ENCODE measurements at regions of chr9 and their contacts with region 1.

Region 1: DNA sequence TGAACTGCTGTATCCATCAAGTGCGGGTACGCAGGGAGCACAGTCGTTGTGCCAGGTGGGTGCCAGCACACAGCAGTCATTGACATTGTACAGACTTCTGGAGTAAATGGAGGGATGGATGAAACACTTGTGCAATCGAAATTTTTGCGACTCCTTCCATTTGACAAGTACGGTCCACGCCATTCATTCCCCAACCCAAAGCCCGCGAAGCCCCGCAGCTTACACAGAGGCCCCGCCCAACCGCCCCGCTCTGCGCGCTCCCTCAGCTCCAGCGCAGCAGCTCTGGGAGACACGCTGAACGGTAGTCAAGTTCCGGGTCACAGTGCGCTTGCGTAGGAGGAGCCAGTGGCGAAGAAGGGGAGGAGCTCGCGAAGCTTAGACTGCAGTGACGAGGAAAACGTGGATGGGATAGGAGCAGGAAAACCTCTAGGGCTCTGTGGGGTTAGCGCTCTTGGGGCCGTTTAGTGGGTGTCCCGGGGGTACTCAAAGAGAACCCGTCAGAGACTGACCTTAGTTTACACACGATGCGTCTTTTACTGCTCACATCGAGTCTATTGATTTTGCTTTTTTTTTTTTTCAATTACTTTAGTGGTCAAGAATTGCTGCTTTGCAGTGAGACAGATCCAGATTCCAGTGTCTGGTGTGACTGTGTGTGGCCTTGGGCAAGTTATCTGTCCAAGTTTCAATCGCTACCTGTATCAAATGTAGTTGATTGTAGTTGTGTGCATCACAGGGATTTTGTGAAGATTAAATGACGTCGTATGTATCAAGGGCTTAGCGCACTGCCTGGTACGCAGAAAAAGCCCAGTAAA is 15.3 kb upstream of the MSANTD3 start:
- DNase-seq: peak; percentile 83
- ATAC-seq: peak; percentile 100
- H3K4me3 Mint-ChIP-seq: peak overlapping the region; percentile 82
- H3K27ac Mint-ChIP-seq: peak overlapping the region; percentile 66
- H3K4me1 Mint-ChIP-seq: peaks cover 14% of the 10 kb centered on the region
- H3K27me3 Mint-ChIP-seq: peaks cover 34% of the 10 kb centered on the region

Region 2: DNA sequence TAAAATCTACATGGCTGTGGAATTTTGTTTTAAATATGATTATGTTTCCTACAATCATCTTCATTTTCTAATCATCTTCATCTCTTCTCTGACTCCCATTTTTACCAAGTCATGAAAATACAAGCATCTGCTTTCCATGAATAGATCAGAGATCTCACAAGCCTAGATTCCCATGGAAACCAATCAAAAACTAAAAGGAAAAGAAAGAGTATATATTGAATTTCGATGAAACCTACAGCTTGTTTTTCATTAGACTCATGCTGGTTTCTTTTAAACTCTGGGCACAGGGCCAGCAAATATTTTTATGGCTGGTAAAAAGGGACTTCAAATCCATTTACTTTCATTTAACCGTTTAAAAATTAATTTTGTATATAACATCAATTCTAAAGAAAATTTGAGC is 261.5 kb before region 1 on chr9:
- POLR2A ChIA-PET with region 1: no interaction called
- DNase-seq: no peak
- ATAC-seq: no peak
- H3K4me3 Mint-ChIP-seq: no peak overlapping the region
- H3K27ac Mint-ChIP-seq: no peak overlapping the region
- H3K4me1 Mint-ChIP-seq: no peaks in the 10 kb centered on the region
- H3K27me3 Mint-ChIP-seq: no peaks in the 10 kb centered on the region

Region 3: DNA sequence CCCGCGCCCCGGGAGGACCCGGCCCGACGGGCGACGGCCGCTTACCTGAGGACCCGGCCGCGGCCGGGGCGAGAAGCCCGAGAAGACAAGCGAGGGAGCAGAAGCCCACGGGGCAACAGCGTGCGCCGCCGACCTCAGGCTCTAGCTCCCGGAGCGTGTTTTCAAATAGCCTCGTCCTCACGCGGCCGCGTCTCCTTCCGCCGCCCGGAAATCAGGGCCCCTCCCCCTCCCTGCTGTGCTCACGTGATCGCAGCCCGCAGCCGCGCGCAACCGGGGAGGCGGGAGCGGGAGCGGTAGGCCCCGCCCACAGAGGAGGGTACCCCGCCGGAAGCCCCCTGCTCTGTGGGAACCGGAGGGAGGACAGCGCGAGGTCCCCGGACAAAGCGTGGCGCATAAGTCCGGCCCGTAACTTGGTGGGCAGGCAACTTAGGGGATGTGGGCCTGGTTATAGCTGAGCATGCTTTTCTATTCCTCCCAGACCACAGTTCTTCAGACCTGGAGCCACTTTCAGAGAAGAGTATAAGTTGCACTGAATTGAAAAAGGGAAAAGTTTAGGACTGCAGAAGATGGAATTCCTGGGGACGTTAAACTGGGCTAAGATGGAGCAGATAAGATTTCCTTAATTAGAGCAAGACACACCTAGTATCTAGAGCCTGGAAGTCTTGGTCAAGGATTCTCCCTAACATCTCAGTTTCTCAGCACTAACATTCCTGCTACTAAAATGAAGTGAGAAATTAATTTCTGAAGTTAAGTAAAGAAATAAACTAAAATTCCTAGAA is 58.8 kb before region 1 on chr9 and contains the start of gene TEX10:
- POLR2A ChIA-PET with region 1: interaction called, 10 read pairs
- DNase-seq: peak; percentile 91
- ATAC-seq: peak; percentile 87
- H3K4me3 Mint-ChIP-seq: peak within 1 kb of the TSS; percentile 97
- H3K27ac Mint-ChIP-seq: peak within 1 kb of the TSS; percentile 86
- H3K4me1 Mint-ChIP-seq: peaks cover 41% of the 10 kb centered on the region
- H3K27me3 Mint-ChIP-seq: no peaks in the 10 kb centered on the region
- total RNA-seq, gene TEX10: 18.6 to 19.8 TPM

Region 4: GRCh38 chr9:100437860-100438805 is 26.5 kb after region 1 on chr9:
- POLR2A ChIA-PET with region 1: no interaction called
- DNase-seq: peak; percentile 35
- ATAC-seq: no peak
- H3K4me3 Mint-ChIP-seq: no peak overlapping the region
- H3K27ac Mint-ChIP-seq: no peak overlapping the region
- H3K4me1 Mint-ChIP-seq: no peaks in the 10 kb centered on the region
- H3K27me3 Mint-ChIP-seq: no peaks in the 10 kb centered on the region

Region 5: GRCh38 chr9:100492952-100493351 is 81.3 kb after region 1 on chr9:
- POLR2A ChIA-PET with region 1: no interaction called
- DNase-seq: no peak
- ATAC-seq: no peak
- H3K4me3 Mint-ChIP-seq: no peak overlapping the region
- H3K27ac Mint-ChIP-seq: no peak overlapping the region
- H3K4me1 Mint-ChIP-seq: no peaks in the 10 kb centered on the region
- H3K27me3 Mint-ChIP-seq: peaks cover 10% of the 10 kb centered on the region